Upper lobe of right lung (tissue), 1 donor: ENCODE measurements at regions of chr20 and their contacts with region 1.

Region 1: GRCh38 chr20:41095110-41095969 is 42.0 kb upstream of the PLCG1 start:
- DNase-seq: no peak
- ATAC-seq: peak; percentile 89
- H3K4me3 ChIP-seq: no peak overlapping the region
- H3K27ac ChIP-seq: no peak overlapping the region
- H3K4me1 ChIP-seq: no peaks in the 10 kb centered on the region
- H3K27me3 ChIP-seq: no peaks in the 10 kb centered on the region
- CTCF ChIP-seq: peak; percentile 84

Region 2: GRCh38 chr20:40980106-40980827 is 115.1 kb before region 1 on chr20:
- intact Hi-C with region 1: no loop called
- DNase-seq: no peak
- ATAC-seq: no peak
- H3K4me3 ChIP-seq: no peak overlapping the region
- H3K27ac ChIP-seq: no peak overlapping the region
- H3K4me1 ChIP-seq: no peaks in the 10 kb centered on the region
- H3K27me3 ChIP-seq: no peaks in the 10 kb centered on the region
- CTCF ChIP-seq: no peak

Region 3: DNA sequence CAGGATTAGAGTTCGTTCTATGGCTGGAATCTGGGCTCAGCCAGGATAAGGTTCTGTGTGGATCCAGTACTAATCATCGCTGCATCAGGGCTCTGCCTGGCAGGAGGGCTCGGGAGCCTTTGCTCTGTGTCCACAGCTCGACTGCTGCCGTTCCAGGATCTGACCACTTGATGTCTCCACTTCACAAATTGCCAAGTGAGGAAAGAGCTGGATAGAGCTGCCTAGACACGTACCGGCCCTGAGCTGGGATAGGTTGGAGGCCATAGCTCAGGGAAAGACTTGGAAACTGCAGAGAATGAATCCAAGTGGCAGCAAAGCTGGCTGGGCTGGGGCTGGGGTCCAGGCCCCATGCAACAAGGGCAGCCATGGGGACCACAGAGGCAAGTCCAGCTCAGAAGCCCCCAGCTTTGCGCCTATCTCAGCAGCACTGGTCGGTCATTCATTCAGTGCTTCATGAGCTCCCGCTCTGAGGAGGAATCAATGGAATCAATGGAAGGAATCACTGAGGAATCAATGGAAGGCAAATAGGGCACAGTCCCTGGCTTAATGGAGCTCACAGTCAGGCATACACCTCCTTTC is 104.7 kb before region 1 on chr20:
- intact Hi-C with region 1: loop called (anchors 10 kb)
- DNase-seq: peak; percentile 83
- ATAC-seq: peak; percentile 96
- H3K4me3 ChIP-seq: no peak overlapping the region
- H3K27ac ChIP-seq: no peak overlapping the region
- H3K4me1 ChIP-seq: peaks cover 11% of the 10 kb centered on the region
- H3K27me3 ChIP-seq: no peaks in the 10 kb centered on the region
- CTCF ChIP-seq: peak; percentile 81

Region 4: GRCh38 chr20:41205313-41205712 is 110.0 kb after region 1 on chr20:
- intact Hi-C with region 1: no loop called
- DNase-seq: no peak
- ATAC-seq: peak; percentile 29
- H3K4me3 ChIP-seq: no peak overlapping the region
- H3K27ac ChIP-seq: no peak overlapping the region
- H3K4me1 ChIP-seq: no peaks in the 10 kb centered on the region
- H3K27me3 ChIP-seq: no peaks in the 10 kb centered on the region
- CTCF ChIP-seq: no peak